Spleen (tissue), 13 donors: ENCODE measurements at regions of chr13 and their contacts with region 1.

Region 1: GRCh38 chr13:72727417-72728289 is at the starts of genes BORA and MZT1:
- DNase-seq: peak; percentile 99
- H3K4me3 ChIP-seq: peak within 1 kb of the TSS; percentile 78 to 99 (median 92)
- H3K27ac ChIP-seq: peak within 1 kb of the TSS; percentile 61 to 88 (median 85)
- H3K4me1 ChIP-seq: peaks cover 14 to 65% (median 41%) of the 10 kb centered on the region in 6 donors
- H3K27me3 ChIP-seq: no peaks in the 10 kb centered on the region
- CTCF ChIP-seq: peak in 1 of 11 experiments; percentile 16
- POLR2A ChIP-seq: peak in 1 of 3 donors; percentile 10
- total RNA-seq, gene BORA: 4.4 to 15.1 (median 5.3) TPM
- total RNA-seq, gene MZT1: 6.8 to 7.9 (median 7.3) TPM

Region 2: DNA sequence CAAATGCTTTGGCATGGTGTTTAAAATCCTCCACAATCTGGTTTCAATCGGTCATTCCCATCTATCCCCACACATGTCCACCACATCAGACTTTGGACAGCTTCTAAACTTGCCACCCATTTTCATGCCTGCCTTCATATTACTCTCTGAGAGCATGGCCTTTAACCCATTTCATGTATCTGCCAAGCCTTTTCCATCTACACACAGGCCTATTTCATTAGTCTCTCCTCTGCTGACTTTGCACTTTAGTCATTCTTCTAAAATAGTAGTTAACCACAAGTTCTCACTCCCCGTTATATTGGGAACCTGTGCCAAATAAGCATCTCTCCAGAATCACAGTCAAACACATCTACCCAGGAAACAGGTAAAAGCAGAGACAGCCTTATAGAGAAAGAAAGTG is 142.4 kb before region 1 on chr13:
- intact Hi-C with region 1: no loop called
- DNase-seq: no peak
- H3K4me3 ChIP-seq: no peak overlapping the region
- H3K27ac ChIP-seq: no peak overlapping the region
- H3K4me1 ChIP-seq: no peaks in the 10 kb centered on the region
- H3K27me3 ChIP-seq: no peaks in the 10 kb centered on the region
- CTCF ChIP-seq: no peak
- POLR2A ChIP-seq: no peak

Region 3: DNA sequence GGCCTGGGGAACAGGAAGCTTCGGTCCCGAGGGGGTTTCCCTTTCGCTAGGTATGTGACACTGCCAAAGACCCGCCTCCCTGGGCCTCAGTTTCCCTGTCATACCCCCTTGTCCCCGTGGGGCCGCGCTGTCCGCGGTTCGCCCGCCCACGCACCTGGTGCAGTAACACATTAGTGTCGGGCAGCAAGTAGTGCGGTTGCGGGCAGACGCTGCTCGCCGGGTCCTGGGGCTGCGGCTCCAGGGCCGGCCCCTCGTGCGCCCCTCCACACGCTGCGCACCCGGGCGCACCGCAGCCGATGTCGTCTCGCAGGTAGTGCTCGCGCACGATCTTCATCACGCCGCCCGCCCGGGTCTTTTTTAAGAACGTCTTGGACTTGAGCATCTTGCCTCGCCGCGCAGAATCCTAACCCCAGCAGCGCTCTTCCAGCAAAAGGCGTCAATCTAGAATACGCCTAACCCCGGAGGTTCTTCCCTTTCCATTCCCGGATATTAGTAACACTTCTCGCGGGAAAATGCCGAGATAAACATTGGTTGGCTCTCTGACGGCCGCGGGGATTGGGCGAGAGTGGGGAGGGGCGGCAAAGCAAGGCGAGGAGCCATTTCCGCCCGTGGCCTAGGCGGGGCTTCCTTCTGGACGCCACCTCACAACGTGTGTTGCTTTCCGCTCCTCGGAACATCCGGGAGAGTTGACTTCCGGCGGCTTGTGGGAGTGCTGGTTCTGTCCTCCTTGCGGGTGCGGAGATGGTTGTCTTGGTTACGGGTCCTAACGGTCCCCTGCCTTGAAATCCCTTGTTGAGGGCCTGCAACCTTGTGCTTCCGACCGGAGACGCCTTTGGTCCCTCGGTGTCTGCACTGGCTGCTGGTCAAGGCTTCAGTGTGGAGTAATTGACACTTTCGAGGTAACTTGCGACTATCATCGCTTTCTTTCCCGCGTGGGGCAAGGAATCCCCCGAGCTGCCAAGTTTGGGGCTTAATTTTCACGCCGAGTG is 54.1 kb after region 1 on chr13 and contains the starts of genes DIS3 and PIBF1:
- intact Hi-C with region 1: loop called (anchors 5 kb)
- DNase-seq: peak; percentile 99
- H3K4me3 ChIP-seq: peak within 1 kb of the TSS; percentile 82 to 100 (median 95)
- H3K27ac ChIP-seq: peak within 1 kb of the TSS; percentile 80 to 94 (median 88)
- H3K4me1 ChIP-seq: peaks cover 23 to 92% (median 65%) of the 10 kb centered on the region in 6 donors
- H3K27me3 ChIP-seq: no peaks in the 10 kb centered on the region
- CTCF ChIP-seq: peak in 3 of 11 experiments; percentile 18 to 48 (median 32)
- POLR2A ChIP-seq: peak in 2 of 3 donors; percentile 15 to 51
- total RNA-seq, gene DIS3: 28.0 to 33.6 (median 28.5) TPM
- total RNA-seq, gene PIBF1: 22.0 to 35.6 (median 32.2) TPM

Region 4: DNA sequence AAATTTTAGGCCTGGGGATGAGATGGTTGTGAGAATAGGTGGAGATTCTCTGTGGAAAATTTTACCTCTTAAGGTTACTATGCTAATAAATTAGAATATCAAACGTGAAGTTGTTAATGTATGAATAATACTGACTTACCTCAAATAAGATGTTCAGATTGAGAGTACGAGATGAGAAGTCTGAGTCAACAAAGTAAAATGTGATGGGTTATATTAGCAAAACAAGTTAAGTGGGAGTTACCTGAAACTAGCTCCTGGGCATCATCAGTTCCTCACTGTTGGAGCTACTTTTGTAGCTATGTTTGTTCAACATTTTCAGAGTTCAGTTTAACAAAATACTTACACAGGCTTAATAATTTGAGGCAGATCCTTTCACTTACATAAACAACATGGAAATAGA is 162.9 kb after region 1 on chr13:
- intact Hi-C with region 1: no loop called
- DNase-seq: no peak
- H3K4me3 ChIP-seq: no peak overlapping the region
- H3K27ac ChIP-seq: no peak overlapping the region
- H3K4me1 ChIP-seq: no peaks in the 10 kb centered on the region
- H3K27me3 ChIP-seq: no peaks in the 10 kb centered on the region
- CTCF ChIP-seq: no peak
- POLR2A ChIP-seq: no peak